Activated CD4-positive, alpha-beta T cell treated with anti-CD3 and anti-CD28 coated beads, Interleukin-2, amount 10 ng/mL, durations not matched to agents 24 days and 14 days (primary cell): ENCODE measurements at regions of chr1 and their contacts with region 1.

Region 1: GRCh38 chr1:172662464-172663109 is 3.7 kb downstream of the FASLG start:
- DNase-seq: peak; percentile 94
- H3K4me3 Mint-ChIP-seq: peak overlapping the region; percentile 79
- H3K27ac Mint-ChIP-seq: peak overlapping the region; percentile 83
- H3K4me1 Mint-ChIP-seq: peaks cover 64% of the 10 kb centered on the region
- H3K27me3 Mint-ChIP-seq: peaks cover 2% of the 10 kb centered on the region

Region 2: DNA sequence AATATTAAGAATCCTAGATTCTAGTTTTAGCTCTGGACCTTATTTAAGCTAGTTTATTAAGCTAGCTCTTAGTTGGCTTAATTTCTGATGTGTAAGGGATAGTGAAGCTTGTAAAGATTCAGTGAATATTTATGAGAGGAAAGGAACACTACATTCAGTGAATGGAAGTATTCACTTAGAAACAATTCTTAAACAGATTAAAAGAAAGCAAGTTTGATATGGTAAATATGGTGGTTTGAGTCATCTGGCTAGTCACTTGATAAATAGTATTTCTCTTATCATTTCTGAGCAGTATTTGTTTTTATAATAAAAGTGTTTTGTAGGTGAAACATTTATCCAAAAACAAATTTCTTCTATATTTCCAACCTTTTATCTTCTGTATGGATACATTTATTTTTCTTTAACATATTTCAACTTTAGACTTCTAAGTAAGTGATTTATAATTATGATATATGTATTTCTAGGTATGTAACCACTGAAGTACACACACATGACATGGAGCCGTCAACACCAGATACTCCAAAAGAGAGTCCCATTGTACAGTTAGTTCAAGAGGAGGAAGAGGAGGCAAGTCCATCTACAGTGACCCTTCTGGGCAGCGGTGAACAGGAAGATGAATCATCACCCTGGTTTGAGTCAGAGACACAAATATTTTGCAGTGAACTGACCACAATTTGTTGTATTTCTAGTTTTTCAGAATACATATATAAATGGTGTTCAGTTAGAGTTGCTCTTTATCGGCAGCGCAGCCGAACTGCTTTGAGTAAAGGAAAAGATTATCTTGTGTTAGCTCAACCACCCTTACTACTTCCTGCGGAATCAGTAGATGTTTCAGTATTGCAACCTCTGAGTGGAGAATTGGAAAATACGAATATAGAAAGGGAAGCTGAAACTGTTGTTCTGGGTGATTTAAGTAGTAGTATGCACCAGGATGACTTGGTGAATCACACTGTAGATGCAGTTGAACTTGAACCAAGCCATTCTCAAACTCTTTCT is 74.0 kb before region 1 on chr1:
- intact Hi-C with region 1: loop called (anchors 1 kb)
- DNase-seq: no peak
- H3K4me3 Mint-ChIP-seq: no peak overlapping the region
- H3K27ac Mint-ChIP-seq: peak overlapping the region; percentile 85
- H3K4me1 Mint-ChIP-seq: peaks cover 12% of the 10 kb centered on the region
- H3K27me3 Mint-ChIP-seq: no peaks in the 10 kb centered on the region

Region 3: DNA sequence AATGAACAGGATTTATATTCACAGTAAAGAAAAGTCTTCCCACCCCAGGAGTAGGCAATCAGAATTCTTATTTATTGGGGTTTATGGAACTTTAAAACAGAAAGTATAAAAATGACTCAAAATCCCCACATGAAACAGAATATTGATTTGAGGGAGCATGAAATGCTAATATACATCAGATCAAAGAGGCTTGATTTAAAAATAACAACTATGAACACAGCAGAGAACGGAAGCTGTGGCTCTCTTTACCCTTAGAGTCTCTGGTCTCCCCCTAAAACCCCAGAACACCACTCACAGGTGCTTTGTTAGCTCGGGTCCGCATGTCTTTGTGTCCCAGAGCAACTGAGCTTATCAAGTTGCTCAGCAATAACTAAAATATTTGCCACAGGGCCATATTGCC is 34.9 kb before region 1 on chr1:
- intact Hi-C with region 1: loop called (anchors 5 kb)
- DNase-seq: peak; percentile 58
- H3K4me3 Mint-ChIP-seq: peak overlapping the region; percentile 4
- H3K27ac Mint-ChIP-seq: no peak overlapping the region
- H3K4me1 Mint-ChIP-seq: peaks cover 39% of the 10 kb centered on the region
- H3K27me3 Mint-ChIP-seq: peaks cover 20% of the 10 kb centered on the region

Region 4: DNA sequence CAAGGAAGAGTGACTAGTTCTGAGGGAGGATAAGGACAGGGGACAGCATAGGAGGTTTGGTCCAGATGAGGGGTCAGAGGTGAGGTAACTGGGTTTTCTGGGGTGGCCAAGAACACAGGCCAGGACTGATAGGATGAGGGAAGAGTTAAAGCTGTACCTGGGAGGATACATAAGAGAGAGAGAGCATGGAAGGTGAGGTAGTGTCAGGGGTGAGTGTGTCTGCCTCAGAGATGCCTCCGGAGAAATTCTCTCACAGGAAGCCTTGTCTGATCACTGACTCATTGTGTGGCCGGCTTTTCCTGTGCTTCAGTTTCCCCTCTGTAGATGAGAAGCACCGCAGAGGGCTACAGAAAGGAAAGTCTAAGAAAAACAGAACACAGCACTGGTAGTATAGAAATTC is 36.5 kb after region 1 on chr1:
- intact Hi-C with region 1: loop called (anchors 1 kb)
- DNase-seq: peak; percentile 92
- H3K4me3 Mint-ChIP-seq: peak overlapping the region; percentile 82
- H3K27ac Mint-ChIP-seq: peak overlapping the region; percentile 90
- H3K4me1 Mint-ChIP-seq: peaks cover 49% of the 10 kb centered on the region
- H3K27me3 Mint-ChIP-seq: no peaks in the 10 kb centered on the region

Region 5: GRCh38 chr1:172719694-172720138 is 57.1 kb after region 1 on chr1:
- intact Hi-C with region 1: loop called (anchors 2 kb)
- DNase-seq: peak; percentile 79
- H3K4me3 Mint-ChIP-seq: no peak overlapping the region
- H3K27ac Mint-ChIP-seq: peak overlapping the region; percentile 35
- H3K4me1 Mint-ChIP-seq: peaks cover 42% of the 10 kb centered on the region
- H3K27me3 Mint-ChIP-seq: no peaks in the 10 kb centered on the region

Region 6: DNA sequence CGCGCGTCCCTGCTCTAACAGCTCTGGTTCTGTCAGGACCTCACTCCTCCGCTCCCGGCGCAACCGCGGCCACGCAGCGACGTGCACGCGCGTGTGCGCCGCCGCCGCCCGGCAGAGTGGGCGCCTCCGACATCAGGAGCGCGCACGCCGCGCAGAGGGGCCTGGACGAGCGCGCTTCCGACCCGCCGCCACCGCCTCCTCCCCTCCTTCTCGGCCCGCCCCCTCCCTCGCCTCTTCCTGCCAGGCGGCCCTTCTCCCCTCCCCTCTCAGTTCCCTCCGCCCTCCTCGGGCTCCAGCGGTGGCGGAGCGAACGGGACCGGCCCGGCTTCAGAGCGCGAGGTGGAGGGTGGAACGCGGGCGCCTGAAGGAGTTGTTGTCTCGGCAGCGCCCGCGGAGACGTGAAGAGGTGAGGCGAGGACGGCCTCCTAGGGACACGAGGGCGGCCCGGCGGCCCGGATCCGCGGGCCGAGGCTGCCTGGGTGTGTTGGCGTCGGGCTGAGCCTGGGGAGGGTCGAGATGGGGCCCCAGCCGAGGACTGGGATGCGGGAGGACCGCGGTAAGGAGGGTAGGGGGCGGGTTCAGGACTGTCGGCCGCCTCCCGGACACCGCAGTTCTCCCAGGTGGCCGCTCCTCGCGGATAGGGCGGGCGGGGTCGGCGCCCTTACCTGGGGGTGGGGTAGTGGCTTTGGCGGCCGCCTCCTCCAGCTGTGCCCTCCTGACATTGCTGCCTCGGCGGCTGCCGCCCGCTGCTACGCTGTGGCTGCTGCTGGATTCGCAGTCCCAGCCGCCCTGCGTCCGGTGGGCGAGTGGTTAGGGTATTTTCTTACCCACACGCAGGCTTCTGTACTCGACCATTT is 1496.9 kb after region 1 on chr1 and contains the start of gene RABGAP1L:
- intact Hi-C with region 1: loop called (anchors 10 kb)
- DNase-seq: peak; percentile 98
- H3K4me3 Mint-ChIP-seq: peak within 1 kb of the TSS; percentile 93
- H3K27ac Mint-ChIP-seq: peak within 1 kb of the TSS; percentile 98
- H3K4me1 Mint-ChIP-seq: peaks cover 52% of the 10 kb centered on the region
- H3K27me3 Mint-ChIP-seq: no peaks in the 10 kb centered on the region
- total RNA-seq, gene RABGAP1L: 36.9 and 37.2 TPM in 2 replicates